Activated T-helper 1 cell treated with anti-CD3 and anti-CD28 coated beads, Interleukin-12 subunit alpha, Interleukin-12 subunit beta, Interleukin-2, Interleukin-4 antibody, amounts not matched to agents 30 ng/mL and 10 ng/mL and 1 ng/mL, durations not matched to agents 14 hours and 24 hours and 36 hours (primary cell): ENCODE measurements at regions of chr13 and their contacts with region 1.

Region 1: GRCh38 chr13:102800145-102801041 is 1.5 kb downstream of the BIVM start:
- DNase-seq: peak; percentile 83
- H3K4me3 Mint-ChIP-seq: peak overlapping the region; percentile 97
- H3K27ac Mint-ChIP-seq: peak overlapping the region; percentile 91
- H3K4me1 Mint-ChIP-seq: peaks cover 43% of the 10 kb centered on the region
- H3K27me3 Mint-ChIP-seq: no peaks in the 10 kb centered on the region

Region 2: DNA sequence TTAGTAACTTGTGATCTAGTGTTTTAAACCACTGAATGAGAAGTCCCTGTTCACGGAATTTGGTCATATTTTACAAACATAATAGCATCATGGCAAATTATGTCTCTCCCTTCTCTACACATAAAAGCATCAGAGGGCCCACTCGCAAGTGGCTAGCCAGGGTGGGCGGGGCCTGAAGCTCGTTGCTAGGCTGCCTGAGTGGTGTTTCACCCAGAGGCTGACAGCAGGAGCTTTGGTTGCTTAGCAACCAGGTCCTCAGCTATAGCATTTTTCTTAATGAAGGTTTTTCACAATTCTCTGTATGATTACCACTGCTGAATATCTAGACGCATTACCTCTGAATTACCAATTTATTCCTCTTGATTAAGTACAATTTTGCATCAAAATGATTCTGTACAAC is 1510.6 kb before region 1 on chr13:
- intact Hi-C with region 1: no loop called
- DNase-seq: no peak
- H3K4me3 Mint-ChIP-seq: no peak overlapping the region
- H3K27ac Mint-ChIP-seq: no peak overlapping the region
- H3K4me1 Mint-ChIP-seq: no peaks in the 10 kb centered on the region
- H3K27me3 Mint-ChIP-seq: peaks cover 2% of the 10 kb centered on the region

Region 3: DNA sequence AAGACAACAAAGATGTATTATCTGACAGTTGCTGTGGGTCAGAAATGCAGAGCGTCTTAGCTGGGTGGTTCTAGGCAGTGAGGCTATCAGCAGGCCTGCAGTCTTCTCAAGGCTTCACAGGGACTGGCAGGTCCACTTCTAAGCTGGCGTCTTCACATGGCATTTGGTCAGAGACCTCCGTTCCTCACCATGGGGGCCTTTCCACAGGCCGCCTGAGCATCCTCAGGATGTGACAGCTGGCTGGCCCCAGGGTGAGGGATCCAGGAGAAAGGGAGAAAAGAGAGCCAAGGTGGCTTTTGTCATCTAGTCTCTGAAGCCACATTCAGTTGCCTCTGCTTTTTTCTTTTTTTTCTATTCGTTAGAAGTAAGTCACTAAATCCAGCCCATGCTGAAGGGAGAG is 448.9 kb before region 1 on chr13:
- intact Hi-C with region 1: no loop called
- DNase-seq: no peak
- H3K4me3 Mint-ChIP-seq: no peak overlapping the region
- H3K27ac Mint-ChIP-seq: no peak overlapping the region
- H3K4me1 Mint-ChIP-seq: no peaks in the 10 kb centered on the region
- H3K27me3 Mint-ChIP-seq: peaks cover 4% of the 10 kb centered on the region

Region 4: DNA sequence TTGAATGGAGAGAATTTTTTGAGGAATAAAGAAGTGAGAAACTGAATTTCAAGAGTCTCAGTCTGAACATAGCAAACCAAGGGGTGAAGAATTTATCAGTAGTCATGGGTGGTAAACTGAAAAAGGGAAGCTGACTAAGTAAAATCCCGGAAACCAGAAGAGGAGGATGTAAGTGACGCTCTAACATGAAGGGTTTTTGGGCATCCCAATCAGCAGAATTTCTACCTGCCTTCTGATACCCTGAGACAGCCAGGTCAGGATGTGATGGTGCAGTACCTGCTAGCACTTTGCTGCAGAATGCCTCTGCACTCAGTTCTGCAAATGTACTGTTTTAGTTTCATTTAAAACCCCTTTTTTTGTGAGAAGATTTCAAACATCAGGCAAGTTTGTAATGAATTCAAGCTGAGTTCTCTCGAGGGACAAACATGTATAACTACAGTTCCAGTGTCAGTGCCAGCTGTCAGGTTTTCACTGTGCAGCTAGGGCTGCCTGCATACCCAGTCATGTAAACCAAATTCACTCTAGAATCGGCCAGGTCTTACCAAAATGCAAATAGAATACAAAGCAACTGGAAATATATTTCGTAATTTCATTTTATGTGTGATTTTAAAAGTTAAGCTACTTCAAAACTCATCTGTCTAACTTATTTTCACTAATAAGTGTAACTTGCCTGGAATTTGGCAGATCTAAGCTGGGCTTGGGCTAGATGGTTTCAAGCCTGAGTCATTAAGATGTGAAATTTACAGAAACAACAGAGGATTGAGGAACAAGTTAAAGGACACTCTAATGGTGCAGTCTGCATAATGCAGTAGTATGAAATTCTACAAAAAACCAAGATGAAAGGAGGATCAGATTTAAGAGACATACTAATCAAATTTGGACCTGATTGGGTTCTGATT is 119.3 kb before region 1 on chr13:
- intact Hi-C with region 1: loop called (anchors 2 kb)
- DNase-seq: no peak
- H3K4me3 Mint-ChIP-seq: peak overlapping the region; percentile 35
- H3K27ac Mint-ChIP-seq: peak overlapping the region; percentile 54
- H3K4me1 Mint-ChIP-seq: peaks cover 41% of the 10 kb centered on the region
- H3K27me3 Mint-ChIP-seq: no peaks in the 10 kb centered on the region

Region 5: DNA sequence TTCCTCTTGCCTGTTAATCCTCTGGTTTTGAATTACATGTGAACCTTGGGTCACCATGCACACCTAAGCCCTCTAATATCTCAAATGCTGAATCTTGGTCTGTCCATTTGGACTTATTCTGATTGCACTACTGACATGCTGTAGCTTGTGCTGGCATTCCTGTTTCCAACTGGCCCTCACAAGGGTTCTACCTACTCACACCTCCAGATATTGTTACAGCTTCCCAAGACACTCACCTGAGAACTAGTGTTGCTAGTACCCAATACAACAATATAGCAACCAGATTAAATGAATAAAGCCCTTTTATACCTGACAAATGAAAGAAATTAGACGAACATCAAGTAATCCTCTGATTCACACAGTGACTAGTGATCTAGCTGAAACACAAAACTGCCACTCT is 43.4 kb before region 1 on chr13:
- intact Hi-C with region 1: loop called (anchors 10 kb)
- DNase-seq: no peak
- H3K4me3 Mint-ChIP-seq: no peak overlapping the region
- H3K27ac Mint-ChIP-seq: no peak overlapping the region
- H3K4me1 Mint-ChIP-seq: no peaks in the 10 kb centered on the region
- H3K27me3 Mint-ChIP-seq: peaks cover 3% of the 10 kb centered on the region

Region 6: DNA sequence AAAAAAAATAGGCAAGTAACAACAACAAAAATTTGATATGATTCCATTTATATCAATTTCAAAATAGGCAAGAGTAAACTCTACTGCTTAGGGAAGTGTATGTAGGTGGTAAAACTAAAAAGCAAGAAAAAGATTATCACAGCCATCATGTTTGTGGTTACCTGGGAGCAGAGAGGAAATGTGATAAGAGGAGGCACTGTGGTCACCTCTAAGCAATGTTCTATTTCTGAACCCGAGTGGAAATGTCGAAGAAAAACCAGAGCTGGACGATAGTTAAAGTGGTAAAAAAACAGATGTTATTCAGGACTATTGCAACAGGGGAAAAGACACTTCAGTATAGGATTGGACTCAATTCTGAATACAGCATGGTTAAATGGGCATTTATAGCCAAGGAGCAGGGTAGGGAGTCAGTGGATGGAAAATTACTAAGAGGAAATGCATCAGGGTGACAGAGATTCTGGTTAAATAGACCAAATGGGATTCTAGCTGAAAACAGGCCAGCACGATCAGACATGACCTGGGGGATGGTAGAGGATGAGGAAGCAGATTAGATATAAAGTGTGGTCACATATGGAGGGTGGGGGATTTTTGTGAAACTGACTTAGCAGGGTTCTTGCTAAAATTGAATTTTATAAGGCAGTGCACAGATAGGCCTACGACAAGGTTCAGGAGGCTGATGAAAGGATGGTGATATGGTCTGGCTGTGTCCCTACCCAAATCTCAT is 20.8 kb before region 1 on chr13:
- intact Hi-C with region 1: loop called (anchors 1 kb)
- DNase-seq: peak; percentile 37
- H3K4me3 Mint-ChIP-seq: peak overlapping the region; percentile 57
- H3K27ac Mint-ChIP-seq: peak overlapping the region; percentile 94
- H3K4me1 Mint-ChIP-seq: peaks cover 50% of the 10 kb centered on the region
- H3K27me3 Mint-ChIP-seq: no peaks in the 10 kb centered on the region

Region 7: GRCh38 chr13:102854675-102855074 is 54.3 kb after region 1 on chr13:
- intact Hi-C with region 1: no loop called
- DNase-seq: no peak
- H3K4me3 Mint-ChIP-seq: peak overlapping the region; percentile 31
- H3K27ac Mint-ChIP-seq: peak overlapping the region; percentile 75
- H3K4me1 Mint-ChIP-seq: peaks cover 34% of the 10 kb centered on the region
- H3K27me3 Mint-ChIP-seq: no peaks in the 10 kb centered on the region

Region 8: GRCh38 chr13:102870677-102871415 is 70.5 kb after region 1 on chr13:
- intact Hi-C with region 1: loop called (anchors 1 kb)
- DNase-seq: peak; percentile 17
- H3K4me3 Mint-ChIP-seq: no peak overlapping the region
- H3K27ac Mint-ChIP-seq: peak overlapping the region; percentile 13
- H3K4me1 Mint-ChIP-seq: peaks cover 21% of the 10 kb centered on the region
- H3K27me3 Mint-ChIP-seq: no peaks in the 10 kb centered on the region